Posterior vena cava (tissue), 2 donors: ENCODE measurements at regions of chr4 and their contacts with region 1.

Region 1: GRCh38 chr4:83074086-83074704 is 39.2 kb downstream of the COPS4 start:
- DNase-seq: no peak

Region 2: DNA sequence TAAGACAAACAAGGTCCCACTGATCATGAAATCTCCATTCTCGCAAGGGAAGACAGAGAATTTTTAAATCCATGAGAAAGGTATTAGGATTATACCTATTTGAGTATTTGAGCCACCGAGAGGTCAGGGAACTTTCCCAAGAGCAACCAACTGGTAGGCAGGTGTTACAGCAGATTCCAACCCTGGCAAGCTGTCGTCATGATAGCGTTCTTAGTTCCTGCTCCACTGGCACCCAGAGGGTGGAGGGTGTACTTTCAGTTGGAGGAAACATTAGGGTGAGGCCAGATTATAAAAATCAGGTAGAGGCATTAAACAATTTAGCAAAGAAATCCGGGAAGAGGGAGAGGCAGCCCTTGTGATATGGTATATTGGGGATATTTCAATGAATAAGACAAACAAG is 187.1 kb after region 1 on chr4:
- intact Hi-C with region 1: loop called in 1 of 2 experiments (anchors 5 kb)
- DNase-seq: no peak

Region 3: GRCh38 chr4:83284193-83285054 is 210.2 kb after region 1 on chr4 and contains the start of gene COQ2:
- intact Hi-C with region 1: loop called in 1 of 2 experiments (anchors 10 kb)
- DNase-seq: peak; percentile 98
- total RNA-seq, gene COQ2: 7.3 to 7.9 TPM